Dorsolateral prefrontal cortex (tissue), 120 donors: ENCODE measurements at regions of chr5 and their contacts with region 1.

Region 1: GRCh38 chr5:78287833-78288232 is 6.7 kb downstream of the AP3B1 start:
- DNase-seq: no peak
- H3K4me3 ChIP-seq: peak overlapping the region in 3 of 59 donors; percentile 0 to 5 (median 1)
- H3K27ac ChIP-seq: peak overlapping the region in 18 of 59 donors; percentile 1 to 55 (median 25)
- H3K27me3 ChIP-seq: no peaks in the 10 kb centered on the region
- CTCF ChIP-seq: no peak

Region 2: GRCh38 chr5:77867194-77867691 is 420.6 kb before region 1 on chr5:
- intact Hi-C with region 1: loop called in 1 of 2 experiments (anchors 10 kb)
- DNase-seq: no peak
- H3K4me3 ChIP-seq: no peak overlapping the region
- H3K27ac ChIP-seq: peak overlapping the region in 54 of 59 donors; percentile 12 to 87 (median 70)
- H3K27me3 ChIP-seq: no peaks in the 10 kb centered on the region
- CTCF ChIP-seq: peak in 55 of 56 donors; percentile 15 to 67 (median 45)